Naive thymus-derived CD4-positive, alpha-beta T cell (primary cell): ENCODE measurements at regions of chr4 and their contacts with region 1.

Region 1: GRCh38 chr4:127965062-127965802 is at the starts of genes ABHD18 and MFSD8:
- DNase-seq: peak; percentile 93 to 98 (median 98)
- ATAC-seq: peak; percentile 96
- H3K4me3 ChIP-seq: peak within 1 kb of the TSS; percentile 100
- H3K4me3 Mint-ChIP-seq: peak within 1 kb of the TSS; percentile 78 to 98 (median 94)
- H3K27ac ChIP-seq: peak within 1 kb of the TSS; percentile 92
- H3K27ac Mint-ChIP-seq: peak within 1 kb of the TSS; percentile 88 to 99 (median 95)
- H3K4me1 ChIP-seq: peaks cover 5 to 13% of the 10 kb centered on the region in 2 donors
- H3K4me1 Mint-ChIP-seq: peaks cover 14 to 66% (median 52%) of the 10 kb centered on the region in 7 donors
- H3K27me3 ChIP-seq: no peaks in the 10 kb centered on the region
- H3K27me3 Mint-ChIP-seq: peaks cover 0 to 3% (median 0%) of the 10 kb centered on the region in 5 donors
- total RNA-seq, gene ABHD18: 22.4 to 26.6 (median 25.1) TPM
- total RNA-seq, gene MFSD8: 20.3 to 54.5 (median 23.0) TPM

Region 2: GRCh38 chr4:127782274-127783025 is 182.8 kb before region 1 on chr4 and contains the start of gene HSPA4L:
- CTCF ChIA-PET with region 1: no interaction called
- POLR2A ChIA-PET with region 1: no interaction called
- intact Hi-C with region 1: loop called (anchors 1 to 5 kb)
- DNase-seq: peak in 8 of 9 donors; percentile 7 to 77 (median 22)
- ATAC-seq: peak; percentile 81
- H3K4me3 ChIP-seq: peak within 1 kb of the TSS; percentile 66
- H3K4me3 Mint-ChIP-seq: peak within 1 kb of the TSS; percentile 86 to 96 (median 91)
- H3K27ac ChIP-seq: no peak within 1 kb of the TSS
- H3K27ac Mint-ChIP-seq: peak within 1 kb of the TSS in 5 of 9 donors; percentile 7 to 86 (median 49)
- H3K4me1 ChIP-seq: peaks cover 0 to 6% of the 10 kb centered on the region in 2 donors
- H3K4me1 Mint-ChIP-seq: peaks cover 13 to 20% (median 18%) of the 10 kb centered on the region in 7 donors
- H3K27me3 ChIP-seq: peaks cover 20 to 21% of the 10 kb centered on the region in 2 donors
- H3K27me3 Mint-ChIP-seq: peaks cover 64 to 78% (median 67%) of the 10 kb centered on the region in 5 donors
- total RNA-seq, gene HSPA4L: 1.1 TPM in 1 of 5 experiments, not detected in the others

Region 3: DNA sequence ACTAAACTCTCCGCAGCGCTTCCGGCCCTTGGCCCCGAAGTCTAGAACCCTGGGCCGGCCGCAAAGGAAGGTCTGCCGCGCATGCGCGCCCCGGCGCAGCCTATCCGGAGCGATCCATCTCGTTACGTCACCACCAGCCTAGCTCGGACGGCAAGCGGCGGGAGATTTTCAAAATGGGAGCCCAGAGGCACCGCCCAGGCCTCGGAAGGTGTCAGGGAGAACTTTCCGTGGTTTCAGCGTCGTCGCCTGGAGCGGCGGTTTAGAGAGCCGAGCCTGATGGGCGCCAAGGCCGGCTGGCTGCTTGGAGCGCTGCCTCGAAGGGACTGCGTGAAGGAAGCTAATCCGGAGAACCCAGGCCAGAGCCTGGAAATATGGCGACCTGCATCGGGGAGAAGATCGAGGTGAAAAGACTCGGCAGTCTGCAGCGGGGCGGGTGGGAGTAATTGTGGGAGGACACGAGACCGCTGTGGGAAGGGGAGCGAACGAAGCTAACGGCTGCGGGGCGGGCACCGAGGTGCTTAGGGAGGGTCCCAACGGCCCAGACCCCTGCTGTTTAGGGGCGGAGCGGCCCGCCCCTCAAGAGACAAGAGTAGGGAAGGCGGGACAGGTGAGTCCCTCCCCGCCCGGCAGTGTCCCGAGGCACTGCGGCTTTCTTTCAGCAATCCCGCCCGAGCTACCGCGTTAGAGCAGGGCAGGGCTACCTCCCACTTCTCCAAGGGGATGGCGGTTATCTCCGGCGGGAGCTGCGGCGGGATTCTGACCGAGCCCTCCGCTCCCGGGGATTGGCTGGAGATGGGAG is 84.3 kb before region 1 on chr4 and contains the start of gene PLK4:
- CTCF ChIA-PET with region 1: interaction called, 8 read pairs
- POLR2A ChIA-PET with region 1: interaction called, 27 read pairs
- intact Hi-C with region 1: loop called (anchors 1 kb)
- DNase-seq: peak; percentile 91 to 96 (median 95)
- ATAC-seq: peak; percentile 97
- H3K4me3 ChIP-seq: peak within 1 kb of the TSS; percentile 93
- H3K4me3 Mint-ChIP-seq: peak within 1 kb of the TSS; percentile 90 to 99 (median 97)
- H3K27ac ChIP-seq: peak within 1 kb of the TSS; percentile 75
- H3K27ac Mint-ChIP-seq: peak within 1 kb of the TSS; percentile 95 to 99 (median 99)
- H3K4me1 ChIP-seq: peaks cover 4 to 10% of the 10 kb centered on the region in 2 donors
- H3K4me1 Mint-ChIP-seq: peaks cover 4 to 37% (median 28%) of the 10 kb centered on the region in 7 donors
- H3K27me3 ChIP-seq: no peaks in the 10 kb centered on the region
- H3K27me3 Mint-ChIP-seq: peaks cover 0 to 3% (median 0%) of the 10 kb centered on the region in 5 donors
- total RNA-seq, gene PLK4: 3.4 to 34.7 (median 3.9) TPM

Region 4: GRCh38 chr4:128177498-128177897 is 212.3 kb after region 1 on chr4:
- CTCF ChIA-PET with region 1: no interaction called
- POLR2A ChIA-PET with region 1: no interaction called
- intact Hi-C with region 1: no loop called
- DNase-seq: no peak
- ATAC-seq: no peak
- H3K4me3 ChIP-seq: no peak overlapping the region
- H3K4me3 Mint-ChIP-seq: no peak overlapping the region
- H3K27ac ChIP-seq: no peak overlapping the region
- H3K27ac Mint-ChIP-seq: no peak overlapping the region
- H3K4me1 ChIP-seq: no peaks in the 10 kb centered on the region
- H3K4me1 Mint-ChIP-seq: peaks cover 0 to 6% (median 0%) of the 10 kb centered on the region in 7 donors
- H3K27me3 ChIP-seq: no peaks in the 10 kb centered on the region
- H3K27me3 Mint-ChIP-seq: no peaks in the 10 kb centered on the region